PC-9 (cell line): ENCODE measurements at regions of chr22 and their contacts with region 1.

Region 1: DNA sequence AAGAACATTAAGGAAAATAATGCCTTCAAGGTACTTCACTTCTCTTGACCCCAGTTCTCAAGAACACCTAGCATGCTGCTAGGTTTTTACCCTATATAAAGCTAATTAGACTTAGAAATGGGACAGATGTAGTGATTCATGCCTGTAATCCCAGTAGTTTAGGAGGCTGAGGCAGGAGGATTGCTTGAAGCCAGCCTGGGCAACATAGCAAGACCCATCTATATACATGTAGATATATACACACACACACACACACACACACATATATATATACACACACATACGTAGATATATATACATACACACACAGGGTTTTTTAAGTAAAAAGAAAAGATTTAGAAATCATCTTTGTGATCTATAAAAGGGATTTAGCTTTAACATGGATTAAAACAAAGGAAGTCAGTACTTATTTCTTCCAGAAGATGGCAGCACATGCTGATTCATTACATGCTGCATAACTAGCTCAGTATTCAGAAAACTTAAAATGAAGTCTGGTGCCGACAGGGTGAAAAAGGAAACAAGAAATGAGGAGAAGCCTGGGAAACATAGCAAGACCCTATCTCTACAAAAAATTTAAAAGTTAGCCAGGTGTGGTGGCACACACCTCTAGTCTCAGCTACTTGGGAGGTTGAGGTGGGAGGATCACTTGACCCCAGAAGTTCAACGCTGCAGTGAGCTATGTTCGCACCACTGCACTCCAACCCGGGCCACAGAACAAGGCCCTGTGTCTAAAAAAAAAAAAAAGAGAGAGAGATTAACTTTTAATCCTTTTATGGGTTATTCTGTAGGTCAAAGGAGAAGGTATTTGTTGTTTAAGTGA is 28.5 kb upstream of the RBX1 start:
- DNase-seq: peak in 1 of 2 experiments; percentile 56
- H3K4me3 ChIP-seq: no peak overlapping the region
- H3K27ac ChIP-seq: no peak overlapping the region
- H3K4me1 ChIP-seq: no peaks in the 10 kb centered on the region
- H3K27me3 ChIP-seq: no peaks in the 10 kb centered on the region
- CTCF ChIP-seq: peak; percentile 89

Region 2: GRCh38 chr22:40911772-40912171 is 10.9 kb before region 1 on chr22:
- CTCF ChIA-PET with region 1: interaction called, 12 read pairs
- POLR2A ChIA-PET with region 1: no interaction called
- intact Hi-C with region 1: no loop called
- DNase-seq: no peak
- H3K4me3 ChIP-seq: no peak overlapping the region
- H3K27ac ChIP-seq: no peak overlapping the region
- H3K4me1 ChIP-seq: no peaks in the 10 kb centered on the region
- H3K27me3 ChIP-seq: no peaks in the 10 kb centered on the region
- CTCF ChIP-seq: no peak

Region 3: DNA sequence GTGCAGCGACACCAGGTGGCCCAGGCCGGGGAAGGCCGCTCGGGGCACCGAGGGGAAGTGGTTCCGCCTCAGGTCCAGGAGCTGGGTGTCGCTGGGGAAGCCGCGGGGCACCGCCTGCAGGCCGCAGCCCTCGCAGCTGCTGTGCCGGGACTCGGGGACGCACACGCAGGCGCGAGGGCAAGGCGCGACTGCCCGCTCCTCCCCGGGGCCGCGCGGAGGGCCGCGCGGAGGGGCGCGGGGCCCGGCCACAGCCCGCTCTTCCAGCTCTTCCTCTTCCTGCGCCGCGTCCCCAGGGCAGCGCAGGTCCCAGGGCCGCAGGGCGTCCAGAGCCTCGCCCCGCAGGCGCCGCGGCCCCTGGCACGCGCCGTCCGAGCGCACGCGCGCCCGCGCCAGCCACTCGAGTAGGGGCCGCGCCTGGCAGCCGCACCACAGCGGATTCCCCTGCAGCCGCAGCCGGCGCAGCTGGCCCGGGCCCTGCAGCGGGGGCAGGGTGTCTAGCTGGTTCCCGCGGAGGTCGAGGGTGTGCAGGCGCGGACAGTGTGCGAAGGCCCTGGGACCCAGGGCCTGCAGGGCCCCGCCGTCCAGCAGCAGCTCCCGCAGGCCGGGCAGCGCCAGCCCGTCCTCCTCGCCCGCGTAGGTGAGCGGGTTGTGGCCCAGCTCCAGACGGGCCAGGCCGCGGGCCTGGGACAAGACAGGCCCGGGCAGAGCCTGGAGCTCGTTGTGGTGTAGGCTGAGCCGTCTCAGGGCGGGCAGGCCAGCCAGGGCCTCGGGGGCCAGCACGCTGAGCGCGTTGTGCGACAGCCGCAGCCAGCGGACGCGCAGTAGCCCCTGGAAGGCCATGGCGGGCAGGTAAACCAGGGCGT is 315.2 kb after region 1 on chr22:
- CTCF ChIA-PET with region 1: interaction called, 26 read pairs
- POLR2A ChIA-PET with region 1: no interaction called
- intact Hi-C with region 1: no loop called
- DNase-seq: peak; percentile 42 to 82
- H3K4me3 ChIP-seq: peak overlapping the region; percentile 50; the same call in 1 of the 2 replicates
- H3K27ac ChIP-seq: no peak overlapping the region
- H3K4me1 ChIP-seq: no peaks in the 10 kb centered on the region
- H3K27me3 ChIP-seq: no peaks in the 10 kb centered on the region
- CTCF ChIP-seq: no peak; the same call in 1 of the 2 replicates